T-cell (primary cell): ENCODE measurements at regions of chr16 and their contacts with region 1.

Region 1: GRCh38 chr16:17511340-17511739 is 40.6 kb upstream of the XYLT1 start:
- DNase-seq: no peak
- ATAC-seq: no peak
- H3K4me3 ChIP-seq: no peak overlapping the region
- H3K4me3 Mint-ChIP-seq: no peak overlapping the region
- H3K27ac ChIP-seq: no peak overlapping the region
- H3K27ac Mint-ChIP-seq: no peak overlapping the region
- H3K4me1 ChIP-seq: no peaks in the 10 kb centered on the region
- H3K4me1 Mint-ChIP-seq: no peaks in the 10 kb centered on the region
- H3K27me3 ChIP-seq: peaks cover 2 to 3% of the 10 kb centered on the region in 2 experiments
- H3K27me3 Mint-ChIP-seq: peaks cover 13 to 21% of the 10 kb centered on the region in 2 donors

Region 2: DNA sequence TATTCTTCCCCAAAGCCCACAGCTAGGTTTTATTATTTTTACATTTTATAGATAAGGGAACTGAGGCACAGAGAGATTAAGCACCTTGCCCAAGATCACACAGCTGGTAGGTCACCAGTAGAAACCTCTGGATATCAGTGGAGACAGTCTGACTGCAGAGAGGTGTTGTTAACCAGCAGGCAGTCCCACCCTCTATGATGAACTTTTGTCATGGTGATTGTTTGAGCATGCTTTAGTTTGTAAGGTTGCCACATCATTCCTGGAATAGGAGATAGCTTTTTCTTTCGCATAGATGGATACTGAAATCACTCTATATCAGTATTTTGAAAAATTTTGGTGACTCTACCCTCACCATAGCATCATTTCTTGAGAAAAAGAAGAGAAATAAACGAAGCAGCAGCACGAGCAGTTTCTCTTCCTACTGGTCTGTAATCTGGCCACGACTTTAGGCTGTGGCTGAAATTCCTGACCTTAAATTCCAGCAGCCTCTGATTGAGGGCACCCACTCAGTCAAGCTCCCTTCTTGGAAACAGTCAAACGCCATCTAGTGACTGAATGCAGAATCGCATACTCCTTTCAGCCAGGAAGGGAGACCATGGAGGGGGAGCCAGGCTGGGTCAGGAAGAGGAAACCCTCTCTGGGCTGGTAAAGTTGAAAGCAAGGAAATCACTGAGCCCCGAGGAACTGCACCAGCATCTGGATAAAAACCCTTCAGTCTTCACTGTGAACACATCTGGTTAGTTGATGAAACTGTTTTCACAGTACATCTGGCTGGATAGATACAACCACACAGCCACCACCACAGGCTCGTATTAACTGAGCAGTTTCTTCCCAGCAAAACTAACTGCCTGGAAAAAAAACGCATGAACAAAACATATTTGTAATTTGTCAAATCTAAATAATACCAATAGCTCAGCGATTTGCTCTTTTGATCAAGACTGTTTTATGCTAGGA is 67.9 kb after region 1 on chr16:
- CTCF ChIA-PET with region 1: interaction called in 1 of 2 experiments, 17 read pairs
- POLR2A ChIA-PET with region 1: no interaction called
- DNase-seq: peak in 34 of 35 experiments; percentile 6 to 82 (median 41)
- ATAC-seq: peak; percentile 63 to 75 (median 70)
- H3K4me3 ChIP-seq: no peak overlapping the region
- H3K4me3 Mint-ChIP-seq: no peak overlapping the region
- H3K27ac ChIP-seq: no peak overlapping the region
- H3K27ac Mint-ChIP-seq: no peak overlapping the region
- H3K4me1 ChIP-seq: peaks cover 0 to 3% of the 10 kb centered on the region in 2 experiments
- H3K4me1 Mint-ChIP-seq: peaks cover 0 to 4% (median 2%) of the 10 kb centered on the region in 3 donors
- H3K27me3 ChIP-seq: no peaks in the 10 kb centered on the region
- H3K27me3 Mint-ChIP-seq: peaks cover 8 to 10% of the 10 kb centered on the region in 2 donors